ENCODE measurements at regions of chr1 and their contacts with region 1.

Region 1: GRCh38 chr1:113677250-113678158 is 81.8 kb downstream of the PHTF1 start:
- DNase-seq: no peak
- ATAC-seq: peak; percentile 39
- H3K4me3 Mint-ChIP-seq: no peak overlapping the region
- H3K27ac Mint-ChIP-seq: no peak overlapping the region
- H3K4me1 Mint-ChIP-seq: no peaks in the 10 kb centered on the region
- H3K27me3 Mint-ChIP-seq: no peaks in the 10 kb centered on the region

Region 2: DNA sequence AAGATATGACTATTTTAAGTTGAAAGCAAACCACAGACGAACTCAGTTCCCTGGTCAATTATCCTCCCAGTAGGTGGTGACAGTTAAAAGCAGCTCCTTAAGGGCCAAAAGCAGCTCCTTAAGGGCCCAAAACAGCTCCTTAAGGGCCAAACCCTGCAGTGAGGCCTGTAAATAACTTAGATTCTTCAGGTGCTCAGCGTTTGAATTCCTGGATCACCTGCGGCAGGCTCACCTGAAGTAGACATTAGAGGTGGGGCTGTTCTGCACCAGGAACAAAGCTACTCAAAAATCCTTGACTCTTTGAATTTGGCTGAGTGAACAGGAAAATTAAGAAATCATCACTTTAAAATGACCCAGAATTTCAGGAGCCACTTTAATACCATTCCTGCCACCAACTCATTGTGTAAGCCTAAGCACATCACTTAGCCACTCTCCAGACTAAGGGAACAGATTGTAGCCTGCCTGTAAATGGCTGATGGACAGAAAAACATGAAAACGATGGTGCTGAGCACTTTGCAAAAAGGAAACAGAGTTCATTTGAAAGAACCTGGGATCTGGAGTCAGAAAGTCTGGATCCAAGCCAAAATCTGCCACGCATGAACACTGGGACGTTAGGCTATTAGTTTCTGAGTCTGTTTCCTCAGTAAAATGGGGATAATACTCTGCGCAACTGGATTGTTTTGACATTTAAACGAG is 477.6 kb before region 1 on chr1:
- CTCF ChIA-PET with region 1: no interaction called
- POLR2A ChIA-PET with region 1: no interaction called
- intact Hi-C with region 1: loop called in 1 of 2 experiments (anchors 10 kb)
- DNase-seq: no peak
- ATAC-seq: no peak
- H3K4me3 Mint-ChIP-seq: no peak overlapping the region
- H3K27ac Mint-ChIP-seq: no peak overlapping the region
- H3K4me1 Mint-ChIP-seq: no peaks in the 10 kb centered on the region
- H3K27me3 Mint-ChIP-seq: no peaks in the 10 kb centered on the region

Region 3: GRCh38 chr1:113567427-113567826 is 110.1 kb before region 1 on chr1:
- CTCF ChIA-PET with region 1: no interaction called
- POLR2A ChIA-PET with region 1: no interaction called
- intact Hi-C with region 1: no loop called
- DNase-seq: no peak
- ATAC-seq: no peak
- H3K4me3 Mint-ChIP-seq: no peak overlapping the region
- H3K27ac Mint-ChIP-seq: no peak overlapping the region
- H3K4me1 Mint-ChIP-seq: no peaks in the 10 kb centered on the region
- H3K27me3 Mint-ChIP-seq: no peaks in the 10 kb centered on the region

Measured in activated CD4-positive, alpha-beta T cell treated with anti-CD3 and anti-CD28 coated beads for 36 hours (primary cell).